Pancreas (tissue), 10 donors: ENCODE measurements at regions of chr1 and their contacts with region 1.

Region 1: GRCh38 chr1:183537405-183537804 is 52.9 kb downstream of the NCF2 start:
- DNase-seq: no peak
- ATAC-seq: no peak
- H3K4me3 ChIP-seq: no peak overlapping the region
- H3K27ac ChIP-seq: no peak overlapping the region
- H3K4me1 ChIP-seq: no peaks in the 10 kb centered on the region
- H3K27me3 ChIP-seq: no peaks in the 10 kb centered on the region
- CTCF ChIP-seq: no peak

Region 2: DNA sequence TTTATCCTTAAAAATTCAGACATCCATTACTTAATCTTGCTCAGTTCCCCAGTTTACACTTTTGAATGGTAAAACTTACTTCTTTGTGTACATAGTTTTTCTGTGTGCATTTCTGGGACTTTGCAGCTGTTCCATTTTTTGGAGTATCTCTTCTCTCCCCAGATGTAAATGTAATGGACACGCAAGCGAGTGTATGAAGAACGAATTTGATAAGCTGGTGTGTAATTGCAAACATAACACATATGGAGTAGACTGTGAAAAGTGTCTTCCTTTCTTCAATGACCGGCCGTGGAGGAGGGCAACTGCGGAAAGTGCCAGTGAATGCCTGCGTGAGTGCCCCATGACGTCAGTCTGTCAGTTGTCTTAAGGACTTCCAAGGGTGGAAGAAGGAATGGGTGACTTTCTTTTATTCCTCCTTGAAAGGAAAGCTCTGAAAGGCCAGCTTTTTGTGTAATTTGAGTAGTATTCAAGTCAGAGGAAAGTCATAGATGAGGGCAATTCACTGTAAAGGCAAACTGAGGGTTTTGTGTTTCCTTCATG is 427.0 kb before region 1 on chr1:
- intact Hi-C with region 1: no loop called
- DNase-seq: no peak
- ATAC-seq: no peak
- H3K4me3 ChIP-seq: no peak overlapping the region
- H3K27ac ChIP-seq: no peak overlapping the region
- H3K4me1 ChIP-seq: no peaks in the 10 kb centered on the region
- H3K27me3 ChIP-seq: no peaks in the 10 kb centered on the region
- CTCF ChIP-seq: no peak

Region 3: GRCh38 chr1:183291802-183292514 is 245.4 kb before region 1 on chr1:
- intact Hi-C with region 1: no loop called
- DNase-seq: no peak
- ATAC-seq: peak in 1 of 4 donors; percentile 27
- H3K4me3 ChIP-seq: no peak overlapping the region
- H3K27ac ChIP-seq: no peak overlapping the region
- H3K4me1 ChIP-seq: peaks cover 0 to 6% (median 0%) of the 10 kb centered on the region in 3 donors
- H3K27me3 ChIP-seq: no peaks in the 10 kb centered on the region
- CTCF ChIP-seq: no peak

Region 4: GRCh38 chr1:183471743-183472487 is 65.5 kb before region 1 on chr1:
- intact Hi-C with region 1: loop called in 1 of 3 experiments (anchors 10 kb)
- DNase-seq: peak; percentile 93 to 99 (median 97)
- ATAC-seq: peak; percentile 77 to 84 (median 80)
- H3K4me3 ChIP-seq: peak overlapping the region; percentile 79 to 98 (median 88)
- H3K27ac ChIP-seq: peak overlapping the region; percentile 97 to 98 (median 98)
- H3K4me1 ChIP-seq: peaks cover 4 to 31% (median 4%) of the 10 kb centered on the region in 3 donors
- H3K27me3 ChIP-seq: no peaks in the 10 kb centered on the region
- CTCF ChIP-seq: no peak